ENCODE measurements at regions of chr16 and their contacts with region 1.

Region 1: GRCh38 chr16:85448557-85449197 is 164.4 kb upstream of the GSE1 start:
- DNase-seq: no peak
- H3K4me3 ChIP-seq: no peak overlapping the region
- H3K27ac ChIP-seq: no peak overlapping the region
- H3K4me1 ChIP-seq: peaks cover 0 to 23% (median 16%) of the 10 kb centered on the region in 4 experiments; a peak in 6 of 7 replicates
- H3K27me3 ChIP-seq: no peaks in the 10 kb centered on the region
- CTCF ChIP-seq: no peak
- EP300 ChIP-seq: no peak
- POLR2A ChIP-seq: no peak
- RAD21 ChIP-seq: no peak

Region 2: GRCh38 chr16:85376292-85377095 is 72.2 kb before region 1 on chr16:
- CTCF ChIA-PET with region 1: no interaction called
- POLR2A ChIA-PET with region 1: no interaction called
- DNase-seq: no peak
- H3K4me3 ChIP-seq: no peak overlapping the region
- H3K27ac ChIP-seq: no peak overlapping the region
- H3K4me1 ChIP-seq: peaks cover 0 to 1% (median 0%) of the 10 kb centered on the region in 4 experiments; a peak in 3 of 7 replicates
- H3K27me3 ChIP-seq: no peaks in the 10 kb centered on the region; a peak in 1 of 7 replicates
- CTCF ChIP-seq: no peak
- EP300 ChIP-seq: no peak
- POLR2A ChIP-seq: no peak
- RAD21 ChIP-seq: no peak

Region 3: DNA sequence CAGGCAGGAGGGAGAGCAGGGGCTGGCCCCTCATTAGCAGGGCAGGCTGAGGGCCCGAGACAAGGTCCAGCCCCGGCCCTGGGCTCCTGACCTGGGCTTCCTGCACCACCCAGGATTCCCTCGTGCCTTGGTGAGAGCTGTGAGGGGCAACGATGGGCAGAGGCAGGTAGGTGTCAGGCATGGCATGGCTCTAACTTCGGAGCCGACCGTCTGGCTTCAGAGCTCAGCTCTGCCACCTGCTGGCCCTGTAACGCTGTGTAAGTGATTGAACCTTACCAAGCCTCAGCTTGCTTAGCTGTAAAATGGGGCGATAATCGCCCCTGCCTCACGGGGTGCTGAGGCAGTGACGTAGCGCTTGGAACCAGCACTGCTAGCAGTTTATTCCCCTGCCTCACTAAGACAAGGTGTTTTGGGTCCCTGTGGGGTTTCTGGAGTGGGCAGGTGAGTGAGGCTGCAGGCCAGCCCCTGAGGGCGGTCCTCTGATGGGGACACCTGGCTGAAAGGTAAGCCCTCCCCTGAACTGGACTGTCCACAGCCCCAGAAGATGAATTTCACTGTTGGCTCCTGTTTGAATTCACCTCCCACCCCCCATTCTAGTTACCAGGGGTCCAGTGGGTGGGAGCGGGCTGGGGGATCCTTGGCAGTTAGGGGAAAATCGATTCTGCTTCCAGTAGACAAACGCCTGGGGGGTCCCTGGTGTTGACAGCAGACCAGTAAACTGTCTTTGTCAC is 20.3 kb before region 1 on chr16:
- CTCF ChIA-PET with region 1: interaction called, 178 read pairs
- POLR2A ChIA-PET with region 1: interaction called, 3 read pairs
- DNase-seq: peak in 1 of 2 experiments; percentile 84
- H3K4me3 ChIP-seq: no peak overlapping the region
- H3K27ac ChIP-seq: no peak overlapping the region
- H3K4me1 ChIP-seq: peaks cover 0 to 4% (median 0%) of the 10 kb centered on the region in 4 experiments; a peak in 3 of 7 replicates
- H3K27me3 ChIP-seq: no peaks in the 10 kb centered on the region; a peak in 1 of 7 replicates
- CTCF ChIP-seq: peak; percentile 70 to 87 (median 86)
- EP300 ChIP-seq: no peak
- POLR2A ChIP-seq: no peak
- RAD21 ChIP-seq: peak; percentile 61 to 67

Region 4: GRCh38 chr16:85461814-85462713 is 13.4 kb after region 1 on chr16:
- CTCF ChIA-PET with region 1: interaction called, 172 read pairs
- POLR2A ChIA-PET with region 1: interaction called, 6 read pairs
- DNase-seq: peak in 1 of 2 experiments; percentile 76
- H3K4me3 ChIP-seq: peak overlapping the region; percentile 4 to 57 (median 46)
- H3K27ac ChIP-seq: no peak overlapping the region
- H3K4me1 ChIP-seq: peaks cover 7 to 33% (median 25%) of the 10 kb centered on the region in 4 experiments
- H3K27me3 ChIP-seq: peaks cover 5 to 49% (median 36%) of the 10 kb centered on the region in 4 experiments; a peak in 6 of 7 replicates
- CTCF ChIP-seq: no peak
- EP300 ChIP-seq: no peak
- POLR2A ChIP-seq: no peak
- RAD21 ChIP-seq: no peak

Region 5: DNA sequence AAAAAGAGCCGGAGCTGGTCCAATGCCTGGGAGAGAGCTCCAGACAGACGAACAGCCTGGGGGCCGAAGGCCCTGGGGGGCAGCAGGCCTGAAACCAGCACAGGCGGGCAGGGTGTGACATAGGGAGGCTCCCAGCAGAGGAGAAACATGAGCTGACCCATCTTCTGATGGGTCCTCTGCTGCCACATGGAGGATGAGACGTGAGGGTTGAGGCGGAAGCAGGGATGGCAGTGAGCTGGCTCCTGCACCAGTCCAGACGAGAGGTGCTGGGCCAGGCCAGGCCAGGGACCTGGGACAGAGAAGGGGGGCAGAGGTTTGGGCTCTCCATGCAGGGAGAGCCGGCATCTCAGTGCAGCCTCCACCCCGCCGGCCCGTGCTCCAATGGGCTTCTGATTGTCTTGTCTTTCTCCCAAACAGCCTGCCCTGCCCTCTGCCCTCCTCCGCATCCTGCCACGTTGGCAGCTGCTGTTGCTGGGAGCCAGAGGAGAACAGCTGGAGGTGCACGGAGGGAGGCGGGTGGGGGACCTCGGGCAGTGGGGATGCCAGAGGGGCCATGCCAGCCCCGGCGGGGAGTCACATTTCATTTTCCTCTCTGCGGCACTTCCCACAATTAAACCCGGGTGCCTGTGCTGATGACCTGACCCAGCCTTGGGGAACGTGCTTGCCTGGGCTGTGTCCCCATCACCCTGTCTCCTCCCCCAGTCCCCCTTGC is 25.4 kb after region 1 on chr16:
- CTCF ChIA-PET with region 1: interaction called, 38 read pairs
- POLR2A ChIA-PET with region 1: no interaction called
- DNase-seq: peak in 1 of 2 experiments; percentile 57
- H3K4me3 ChIP-seq: no peak overlapping the region
- H3K27ac ChIP-seq: no peak overlapping the region
- H3K4me1 ChIP-seq: peaks cover 4 to 23% (median 13%) of the 10 kb centered on the region in 4 experiments
- H3K27me3 ChIP-seq: no peaks in the 10 kb centered on the region; a peak in 1 of 7 replicates
- CTCF ChIP-seq: peak in 1 of 3 experiments; percentile 16; a peak in 1 of 4 replicates
- EP300 ChIP-seq: no peak
- POLR2A ChIP-seq: no peak
- RAD21 ChIP-seq: peak in 1 of 2 experiments; percentile 20; a peak in 2 of 4 replicates

Region 6: GRCh38 chr16:85514595-85515318 is 66.1 kb after region 1 on chr16:
- CTCF ChIA-PET with region 1: interaction called, 11 read pairs
- POLR2A ChIA-PET with region 1: no interaction called
- DNase-seq: no peak
- H3K4me3 ChIP-seq: no peak overlapping the region
- H3K27ac ChIP-seq: no peak overlapping the region
- H3K4me1 ChIP-seq: peaks cover 0 to 20% (median 14%) of the 10 kb centered on the region in 4 experiments; a peak in 6 of 7 replicates
- H3K27me3 ChIP-seq: no peaks in the 10 kb centered on the region; a peak in 1 of 7 replicates
- CTCF ChIP-seq: no peak
- EP300 ChIP-seq: no peak
- POLR2A ChIP-seq: no peak
- RAD21 ChIP-seq: no peak

Measured in H1 (cell line).